ENCODE measurements at regions of chr2 and their contacts with region 1.

Region 1: DNA sequence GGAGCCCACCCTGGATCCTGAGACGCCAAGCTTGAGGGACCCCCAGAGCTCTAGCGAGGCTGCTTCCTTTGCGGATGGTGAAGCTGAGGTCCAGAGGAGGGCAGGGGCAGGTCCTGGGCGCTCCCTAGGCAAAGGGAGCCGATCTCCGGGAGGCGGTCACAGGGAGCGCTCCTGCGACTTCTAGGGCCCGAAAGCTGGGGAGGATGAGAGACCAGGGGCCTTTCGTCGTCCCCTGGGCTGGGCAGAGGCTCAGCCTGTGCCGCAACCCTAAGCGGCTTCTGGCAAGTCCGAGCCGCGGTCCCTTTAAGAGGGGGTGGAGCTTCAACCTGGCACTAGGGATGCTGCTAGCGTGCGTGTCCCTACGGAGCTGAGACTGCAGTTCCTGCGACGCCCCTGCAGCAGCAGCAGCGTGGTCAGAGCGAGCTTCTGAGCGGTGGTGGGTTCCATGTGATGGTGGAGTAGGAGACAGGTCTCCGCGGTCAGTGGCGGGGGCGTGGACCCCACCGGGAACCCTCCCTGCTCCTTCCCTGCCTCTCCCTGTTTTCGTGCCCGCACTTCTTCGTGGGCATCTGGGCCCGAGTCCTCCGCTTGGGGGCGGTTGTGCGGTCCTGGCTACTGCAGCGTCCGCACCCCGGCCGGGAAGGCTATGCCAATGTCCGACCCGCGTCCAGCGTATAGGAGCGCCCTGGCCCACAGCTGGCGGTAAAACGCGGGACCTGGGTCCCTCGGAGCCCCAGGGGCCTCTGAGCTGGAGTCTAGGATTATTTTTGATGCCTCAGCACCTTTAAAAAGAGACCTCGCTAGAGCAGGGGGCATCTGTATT is 154.6 kb downstream of the CCDC74A start:
- DNase-seq: peak; percentile 85
- H3K4me3 Mint-ChIP-seq: peak overlapping the region; percentile 85
- H3K27ac Mint-ChIP-seq: peak overlapping the region; percentile 43
- H3K4me1 Mint-ChIP-seq: peaks cover 43% of the 10 kb centered on the region
- H3K27me3 Mint-ChIP-seq: no peaks in the 10 kb centered on the region
- CTCF ChIP-seq: peak; percentile 35

Region 2: DNA sequence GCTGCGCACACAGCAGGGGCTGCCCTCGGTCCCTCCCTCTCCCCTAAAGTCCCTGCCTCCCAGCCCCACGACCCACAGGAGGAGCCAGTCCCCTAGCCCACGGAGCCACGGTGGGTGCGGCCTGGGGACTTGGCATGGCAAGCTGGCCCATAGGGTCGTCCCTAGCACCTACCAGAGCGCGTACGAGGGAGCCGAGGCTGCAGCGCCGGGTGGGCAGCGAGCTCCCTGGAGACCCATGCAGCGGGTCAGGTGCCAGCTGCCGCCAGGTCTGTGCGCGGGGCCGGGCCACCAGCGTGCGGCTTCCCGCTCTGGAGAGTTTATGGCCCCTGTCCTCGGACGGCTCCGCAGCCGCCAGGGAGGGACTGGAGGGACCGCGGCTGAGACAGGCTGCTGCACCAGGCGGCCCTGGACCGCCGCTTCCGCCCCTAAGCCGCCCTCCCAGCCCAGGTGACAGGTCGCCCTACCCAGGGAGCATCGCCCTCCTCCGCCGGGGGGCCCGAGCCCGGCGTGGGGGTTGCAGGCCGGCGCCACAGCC is 118.9 kb after region 1 on chr2:
- CTCF ChIA-PET with region 1: interaction called, 14 read pairs
- intact Hi-C with region 1: no loop called
- DNase-seq: no peak
- H3K4me3 Mint-ChIP-seq: no peak overlapping the region
- H3K27ac Mint-ChIP-seq: no peak overlapping the region
- H3K4me1 Mint-ChIP-seq: no peaks in the 10 kb centered on the region
- H3K27me3 Mint-ChIP-seq: no peaks in the 10 kb centered on the region
- CTCF ChIP-seq: no peak